Thyroid gland (tissue), 4 donors: ENCODE measurements at regions of chr6 and their contacts with region 1.

Region 1: GRCh38 chr6:111642463-111643158 is 36.9 kb upstream of the TRAF3IP2 start:
- DNase-seq: peak; percentile 56 to 71
- H3K4me3 ChIP-seq: no peak overlapping the region
- H3K27ac ChIP-seq: no peak overlapping the region
- H3K4me1 ChIP-seq: peaks cover 0 to 5% of the 10 kb centered on the region in 2 donors
- H3K27me3 ChIP-seq: no peaks in the 10 kb centered on the region
- CTCF ChIP-seq: peak in 5 of 6 experiments; percentile 35 to 68 (median 56)
- POLR2A ChIP-seq: no peak

Region 2: GRCh38 chr6:111259089-111259831 is 383.4 kb before region 1 on chr6:
- intact Hi-C with region 1: loop called (anchors 10 kb)
- DNase-seq: peak; percentile 99
- H3K4me3 ChIP-seq: peak overlapping the region; percentile 56 to 96 (median 71)
- H3K27ac ChIP-seq: peak overlapping the region; percentile 74 to 80 (median 79)
- H3K4me1 ChIP-seq: peaks cover 9 to 11% of the 10 kb centered on the region in 2 donors
- H3K27me3 ChIP-seq: no peaks in the 10 kb centered on the region
- CTCF ChIP-seq: peak; percentile 83 to 99 (median 97)
- POLR2A ChIP-seq: peak in 1 of 2 donors; percentile 90